ENCODE measurements at regions of chr2 and their contacts with region 1.

Region 1: GRCh38 chr2:216404010-216404618 is 8.2 kb upstream of the SMARCAL1 start:
- DNase-seq: peak; percentile 9
- H3K4me3 Mint-ChIP-seq: no peak overlapping the region
- H3K27ac Mint-ChIP-seq: no peak overlapping the region
- H3K4me1 Mint-ChIP-seq: no peaks in the 10 kb centered on the region
- H3K27me3 Mint-ChIP-seq: peaks cover 15% of the 10 kb centered on the region

Region 2: GRCh38 chr2:216151313-216152030 is 252.6 kb before region 1 on chr2:
- intact Hi-C with region 1: loop called (anchors 1 kb)
- DNase-seq: no peak
- H3K4me3 Mint-ChIP-seq: no peak overlapping the region
- H3K27ac Mint-ChIP-seq: peak overlapping the region; percentile 18
- H3K4me1 Mint-ChIP-seq: peaks cover 49% of the 10 kb centered on the region
- H3K27me3 Mint-ChIP-seq: no peaks in the 10 kb centered on the region

Region 3: GRCh38 chr2:216328347-216328746 is 75.8 kb before region 1 on chr2:
- intact Hi-C with region 1: loop called (anchors 2 kb)
- DNase-seq: no peak
- H3K4me3 Mint-ChIP-seq: no peak overlapping the region
- H3K27ac Mint-ChIP-seq: no peak overlapping the region
- H3K4me1 Mint-ChIP-seq: no peaks in the 10 kb centered on the region
- H3K27me3 Mint-ChIP-seq: peaks cover 2% of the 10 kb centered on the region